ENCODE measurements at regions of chr6 and their contacts with region 1.

Region 1: DNA sequence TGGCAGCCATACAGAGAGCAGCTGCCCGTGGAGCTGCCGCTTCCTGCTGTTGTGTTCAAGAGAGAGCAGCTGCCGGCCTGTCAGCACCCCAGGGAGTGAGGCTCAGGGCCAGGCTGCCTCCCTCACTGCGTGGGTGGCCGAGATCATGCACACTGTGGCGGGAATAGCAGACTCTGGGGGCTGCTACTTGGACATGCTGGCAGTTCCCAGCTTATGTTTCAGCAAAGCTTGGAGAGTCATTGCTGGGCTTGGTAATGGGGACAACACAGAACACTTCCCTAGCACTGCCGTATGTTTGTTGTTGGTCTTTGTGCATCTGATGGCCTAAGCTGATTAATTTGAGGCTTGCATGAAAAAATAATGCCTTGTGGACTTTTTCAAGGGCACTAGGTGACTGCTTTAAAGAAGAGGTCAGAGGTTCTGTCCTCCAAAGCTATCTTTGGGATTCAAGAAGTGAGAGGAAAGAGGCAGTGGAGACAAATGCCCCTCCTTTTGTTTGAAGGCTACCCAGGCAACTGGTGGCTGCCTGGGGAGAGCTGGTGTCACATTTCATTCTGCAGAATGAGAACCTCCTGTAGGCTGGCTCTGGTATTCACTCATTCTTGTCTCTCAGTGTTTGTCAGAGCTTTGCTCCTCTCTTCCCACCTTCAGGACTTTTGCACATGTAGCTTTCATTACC is 18.8 kb downstream of the MRAP2 start:
- DNase-seq: peak; percentile 55 to 84 (median 69)
- ATAC-seq: peak; percentile 93
- H3K4me3 ChIP-seq: 0 out of 2 replicates have a peak overlapping the region, but pooled peaks have one; percentile 2
- H3K27ac ChIP-seq: peak overlapping the region; percentile 65
- H3K4me1 ChIP-seq: peaks cover 24 to 33% of the 10 kb centered on the region in 2 experiments
- H3K27me3 ChIP-seq: no peaks in the 10 kb centered on the region
- CTCF ChIP-seq: peak in 2 of 3 experiments; percentile 8 to 29; a peak in 3 of 6 replicates
- EP300 ChIP-seq: no peak
- POLR2A ChIP-seq: no peak
- RAD21 ChIP-seq: peak in 1 of 2 experiments; percentile 27; a peak in 1 of 4 replicates

Region 2: GRCh38 chr6:83615025-83615999 is 437.0 kb before region 1 on chr6:
- CTCF ChIA-PET with region 1: no interaction called
- POLR2A ChIA-PET with region 1: no interaction called
- in situ Hi-C with region 1: no loop called
- intact Hi-C with region 1: no loop called
- DNase-seq: peak; percentile 31 to 48 (median 36)
- ATAC-seq: peak; percentile 78
- H3K4me3 ChIP-seq: no peak overlapping the region
- H3K27ac ChIP-seq: no peak overlapping the region
- H3K4me1 ChIP-seq: no peaks in the 10 kb centered on the region
- H3K27me3 ChIP-seq: no peaks in the 10 kb centered on the region; a peak in 1 of 5 replicates
- CTCF ChIP-seq: peak; percentile 33 to 68 (median 59); a peak in 5 of 6 replicates
- EP300 ChIP-seq: no peak
- POLR2A ChIP-seq: no peak
- RAD21 ChIP-seq: peak; percentile 53 to 66

Region 3: GRCh38 chr6:83696674-83697073 is 355.7 kb before region 1 on chr6:
- CTCF ChIA-PET with region 1: no interaction called
- POLR2A ChIA-PET with region 1: no interaction called
- in situ Hi-C with region 1: no loop called
- intact Hi-C with region 1: no loop called
- DNase-seq: no peak
- ATAC-seq: no peak
- H3K4me3 ChIP-seq: no peak overlapping the region
- H3K27ac ChIP-seq: no peak overlapping the region
- H3K4me1 ChIP-seq: no peaks in the 10 kb centered on the region
- H3K27me3 ChIP-seq: no peaks in the 10 kb centered on the region
- CTCF ChIP-seq: no peak
- EP300 ChIP-seq: no peak
- POLR2A ChIP-seq: no peak
- RAD21 ChIP-seq: no peak

Region 4: GRCh38 chr6:83962582-83962981 is 89.8 kb before region 1 on chr6:
- CTCF ChIA-PET with region 1: no interaction called
- POLR2A ChIA-PET with region 1: no interaction called
- in situ Hi-C with region 1: no loop called
- intact Hi-C with region 1: no loop called
- DNase-seq: peak in 1 of 4 experiments; percentile 51
- ATAC-seq: peak; percentile 71
- H3K4me3 ChIP-seq: no peak overlapping the region
- H3K27ac ChIP-seq: no peak overlapping the region
- H3K4me1 ChIP-seq: peaks cover 0 to 11% of the 10 kb centered on the region in 2 experiments; a peak in 2 of 5 replicates
- H3K27me3 ChIP-seq: no peaks in the 10 kb centered on the region
- CTCF ChIP-seq: no peak
- EP300 ChIP-seq: no peak
- POLR2A ChIP-seq: no peak
- RAD21 ChIP-seq: 0 out of 4 replicates have a peak, but pooled peaks of 1 of the 2 experiments have one; percentile 7

Region 5: GRCh38 chr6:84137051-84137375 is 84.7 kb after region 1 on chr6:
- CTCF ChIA-PET with region 1: no interaction called
- POLR2A ChIA-PET with region 1: no interaction called
- in situ Hi-C with region 1: no loop called
- intact Hi-C with region 1: loop called (anchors 5 kb)
- DNase-seq: peak; percentile 54 to 90 (median 66)
- ATAC-seq: peak; percentile 96
- H3K4me3 ChIP-seq: no peak overlapping the region
- H3K27ac ChIP-seq: peak overlapping the region; percentile 80
- H3K4me1 ChIP-seq: peaks cover 0 to 14% of the 10 kb centered on the region in 2 experiments; a peak in 3 of 5 replicates
- H3K27me3 ChIP-seq: no peaks in the 10 kb centered on the region
- CTCF ChIP-seq: no peak
- EP300 ChIP-seq: no peak; the same call in 1 of the 2 replicates
- POLR2A ChIP-seq: no peak
- RAD21 ChIP-seq: peak in 1 of 2 experiments; percentile 17; a peak in 1 of 4 replicates

Region 6: GRCh38 chr6:84696166-84696565 is 643.8 kb after region 1 on chr6:
- CTCF ChIA-PET with region 1: no interaction called
- POLR2A ChIA-PET with region 1: no interaction called
- in situ Hi-C with region 1: no loop called
- intact Hi-C with region 1: no loop called
- DNase-seq: no peak
- ATAC-seq: no peak
- H3K4me3 ChIP-seq: no peak overlapping the region
- H3K27ac ChIP-seq: no peak overlapping the region
- H3K4me1 ChIP-seq: no peaks in the 10 kb centered on the region; a peak in 1 of 5 replicates
- H3K27me3 ChIP-seq: no peaks in the 10 kb centered on the region
- CTCF ChIP-seq: no peak
- EP300 ChIP-seq: no peak
- POLR2A ChIP-seq: no peak
- RAD21 ChIP-seq: no peak

Measured in K562 (cell line).